Prostate gland (tissue), 2 donors: ENCODE measurements at regions of chr21 and their contacts with region 1.

Region 1: GRCh38 chr21:38355992-38356797 is 99.4 kb downstream of the KCNJ15 start:
- DNase-seq: peak; percentile 68
- H3K4me3 ChIP-seq: no peak overlapping the region
- H3K27ac ChIP-seq: no peak overlapping the region
- H3K4me1 ChIP-seq: no peaks in the 10 kb centered on the region
- H3K27me3 ChIP-seq: no peaks in the 10 kb centered on the region
- CTCF ChIP-seq: peak; percentile 80 to 97 (median 94)
- POLR2A ChIP-seq: no peak

Region 2: GRCh38 chr21:36450511-36450910 is 1905.7 kb before region 1 on chr21:
- intact Hi-C with region 1: no loop called
- DNase-seq: no peak
- H3K4me3 ChIP-seq: no peak overlapping the region
- H3K27ac ChIP-seq: no peak overlapping the region
- H3K4me1 ChIP-seq: no peaks in the 10 kb centered on the region
- H3K27me3 ChIP-seq: no peaks in the 10 kb centered on the region
- CTCF ChIP-seq: no peak
- POLR2A ChIP-seq: no peak

Region 3: DNA sequence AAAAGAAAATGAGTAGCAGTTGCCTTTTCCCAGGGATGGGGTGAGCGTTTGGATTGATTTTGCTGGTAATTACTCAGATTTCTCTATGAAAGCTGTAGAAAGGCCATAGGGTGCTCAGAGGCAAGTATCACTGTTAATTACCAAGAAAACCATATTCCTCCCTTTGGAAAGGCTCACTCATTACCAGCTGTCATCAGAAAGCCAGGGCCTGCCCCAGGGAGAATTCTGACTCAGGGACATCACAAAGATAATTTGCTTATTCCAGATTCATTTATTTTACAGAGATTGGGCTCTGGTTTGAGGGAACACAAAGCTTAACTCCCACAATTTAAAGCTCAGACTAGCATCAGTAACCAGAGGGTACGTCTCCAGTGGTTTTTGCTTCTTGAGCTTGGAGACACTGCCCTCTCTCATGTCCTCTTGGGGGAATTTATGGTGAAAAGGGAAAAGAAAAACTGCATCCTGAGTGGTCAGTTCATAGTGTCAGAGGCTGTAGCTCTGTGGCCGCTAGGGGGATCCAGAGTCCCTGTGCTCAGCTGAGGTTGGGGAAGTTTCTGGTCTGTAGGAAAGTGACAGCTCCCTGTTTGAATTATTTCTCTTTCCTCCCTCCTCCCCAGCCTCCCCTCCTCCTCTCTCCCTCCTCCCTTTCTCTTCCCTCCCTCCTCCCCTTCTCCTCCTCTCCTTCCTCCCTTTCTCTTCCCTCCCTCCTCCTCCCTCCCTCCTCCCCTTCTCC is 644.2 kb before region 1 on chr21:
- intact Hi-C with region 1: loop called (anchors 5 kb)
- DNase-seq: peak; percentile 47
- H3K4me3 ChIP-seq: no peak overlapping the region
- H3K27ac ChIP-seq: no peak overlapping the region
- H3K4me1 ChIP-seq: no peaks in the 10 kb centered on the region
- H3K27me3 ChIP-seq: no peaks in the 10 kb centered on the region
- CTCF ChIP-seq: peak; percentile 25 to 78 (median 64)
- POLR2A ChIP-seq: no peak

Region 4: GRCh38 chr21:38219049-38219628 is 137.1 kb before region 1 on chr21:
- intact Hi-C with region 1: loop called (anchors 2 kb)
- DNase-seq: peak; percentile 81
- H3K4me3 ChIP-seq: no peak overlapping the region
- H3K27ac ChIP-seq: peak overlapping the region in 1 of 2 donors; percentile 8
- H3K4me1 ChIP-seq: no peaks in the 10 kb centered on the region
- H3K27me3 ChIP-seq: no peaks in the 10 kb centered on the region
- CTCF ChIP-seq: peak; percentile 90 to 98 (median 94)
- POLR2A ChIP-seq: no peak

Region 5: DNA sequence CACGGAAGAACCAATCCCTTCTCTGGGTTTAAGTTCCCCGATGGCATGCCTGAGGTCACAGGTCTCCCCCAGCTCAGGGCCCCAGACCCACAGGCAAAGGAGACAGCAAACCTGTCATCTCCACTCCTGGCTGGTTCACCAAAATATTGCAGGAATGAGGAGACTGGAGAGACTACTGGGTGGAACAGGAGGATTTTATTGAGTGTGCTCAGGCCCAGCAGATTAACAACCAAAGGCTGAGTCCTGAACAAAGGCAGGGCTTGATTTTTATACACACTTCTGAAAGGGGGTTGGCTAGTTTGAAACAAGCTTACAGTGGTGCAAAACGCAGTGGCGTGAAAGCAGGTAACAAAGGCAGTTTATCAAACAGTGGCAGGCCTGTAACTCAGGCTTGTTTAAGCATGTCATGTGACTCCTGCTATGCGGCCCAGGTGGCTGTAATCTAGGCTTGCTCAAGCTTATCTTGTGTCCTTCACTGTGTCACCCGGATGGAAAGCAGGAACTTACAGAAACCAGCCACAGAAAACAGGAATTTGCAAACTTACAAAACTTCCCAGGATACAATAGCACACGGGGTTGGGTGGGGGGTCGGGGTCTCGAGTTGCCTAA is 126.8 kb before region 1 on chr21:
- intact Hi-C with region 1: no loop called
- DNase-seq: no peak
- H3K4me3 ChIP-seq: no peak overlapping the region
- H3K27ac ChIP-seq: no peak overlapping the region
- H3K4me1 ChIP-seq: no peaks in the 10 kb centered on the region
- H3K27me3 ChIP-seq: no peaks in the 10 kb centered on the region
- CTCF ChIP-seq: no peak
- POLR2A ChIP-seq: no peak

Region 6: GRCh38 chr21:38244885-38245545 is 111.2 kb before region 1 on chr21:
- intact Hi-C with region 1: no loop called
- DNase-seq: no peak
- H3K4me3 ChIP-seq: no peak overlapping the region
- H3K27ac ChIP-seq: no peak overlapping the region
- H3K4me1 ChIP-seq: no peaks in the 10 kb centered on the region
- H3K27me3 ChIP-seq: no peaks in the 10 kb centered on the region
- CTCF ChIP-seq: no peak
- POLR2A ChIP-seq: no peak

Region 7: GRCh38 chr21:38556406-38556805 is 200.2 kb after region 1 on chr21:
- intact Hi-C with region 1: no loop called
- DNase-seq: no peak
- H3K4me3 ChIP-seq: no peak overlapping the region
- H3K27ac ChIP-seq: no peak overlapping the region
- H3K4me1 ChIP-seq: no peaks in the 10 kb centered on the region
- H3K27me3 ChIP-seq: no peaks in the 10 kb centered on the region
- CTCF ChIP-seq: no peak
- POLR2A ChIP-seq: no peak